Spleen (tissue), 13 donors: ENCODE measurements at regions of chr20 and their contacts with region 1.

Region 1: GRCh38 chr20:32789896-32790750 is 27.9 kb downstream of the DNMT3B start:
- DNase-seq: peak; percentile 91
- H3K4me3 ChIP-seq: no peak overlapping the region
- H3K27ac ChIP-seq: no peak overlapping the region
- H3K4me1 ChIP-seq: peaks cover 9 to 39% (median 17%) of the 10 kb centered on the region in 6 donors
- H3K27me3 ChIP-seq: no peaks in the 10 kb centered on the region
- CTCF ChIP-seq: peak; percentile 95 to 98 (median 98)
- POLR2A ChIP-seq: no peak

Region 2: GRCh38 chr20:33097001-33097400 is 306.9 kb after region 1 on chr20:
- intact Hi-C with region 1: loop called (anchors 5 kb)
- DNase-seq: no peak
- H3K4me3 ChIP-seq: no peak overlapping the region
- H3K27ac ChIP-seq: no peak overlapping the region
- H3K4me1 ChIP-seq: peaks cover 0 to 13% (median 0%) of the 10 kb centered on the region in 6 donors
- H3K27me3 ChIP-seq: peaks cover 0 to 3% (median 0%) of the 10 kb centered on the region in 7 donors
- CTCF ChIP-seq: no peak
- POLR2A ChIP-seq: no peak

Region 3: DNA sequence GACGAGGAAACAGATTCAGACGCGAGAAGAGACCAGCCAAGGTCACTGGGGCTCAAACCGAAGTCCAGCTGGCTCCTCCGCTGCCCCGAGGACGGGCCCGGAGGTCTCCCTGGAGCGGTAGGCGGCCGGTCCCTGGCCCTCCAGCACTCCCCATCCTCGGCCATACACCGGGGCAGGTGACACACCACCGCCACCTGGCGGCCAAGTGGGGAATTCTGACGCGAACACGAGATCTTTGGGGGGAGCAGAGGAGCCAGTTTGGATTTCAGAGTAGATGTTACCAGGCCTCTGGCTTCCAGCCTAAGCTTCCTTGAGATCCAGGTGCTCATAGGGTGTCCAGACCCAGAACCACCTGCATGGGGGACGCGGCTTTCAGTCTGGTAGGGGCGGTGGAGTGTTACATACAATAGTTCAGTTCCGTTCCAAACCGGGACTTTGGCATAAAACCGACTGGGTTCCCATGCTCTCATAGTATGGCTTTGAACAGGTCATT is 509.0 kb after region 1 on chr20:
- intact Hi-C with region 1: loop called (anchors 10 kb)
- DNase-seq: peak; percentile 91
- H3K4me3 ChIP-seq: no peak overlapping the region
- H3K27ac ChIP-seq: no peak overlapping the region
- H3K4me1 ChIP-seq: peaks cover 4 to 8% (median 6%) of the 10 kb centered on the region in 6 donors
- H3K27me3 ChIP-seq: peaks cover 0 to 37% (median 0%) of the 10 kb centered on the region in 7 donors
- CTCF ChIP-seq: peak; percentile 52 to 90 (median 83)
- POLR2A ChIP-seq: no peak